Naive thymus-derived CD8-positive, alpha-beta T cell (primary cell): ENCODE measurements at regions of chr22 and their contacts with region 1.

Region 1: GRCh38 chr22:42090596-42091454 is at the start of gene NDUFA6:
- DNase-seq: peak; percentile 92 to 99 (median 98)
- ATAC-seq: peak; percentile 86 to 92
- H3K4me3 Mint-ChIP-seq: peak within 1 kb of the TSS; percentile 94 to 99 (median 98)
- H3K27ac Mint-ChIP-seq: peak within 1 kb of the TSS; percentile 95 to 100 (median 99)
- H3K4me1 Mint-ChIP-seq: peaks cover 16 to 44% (median 28%) of the 10 kb centered on the region in 4 donors
- H3K27me3 Mint-ChIP-seq: no peaks in the 10 kb centered on the region
- polyA plus RNA-seq, gene NDUFA6: 106 to 137 (median 115) TPM

Region 2: GRCh38 chr22:42039271-42039670 is 51.6 kb before region 1 on chr22:
- POLR2A ChIA-PET with region 1: no interaction called
- DNase-seq: no peak
- ATAC-seq: no peak
- H3K4me3 Mint-ChIP-seq: no peak overlapping the region
- H3K27ac Mint-ChIP-seq: no peak overlapping the region
- H3K4me1 Mint-ChIP-seq: peaks cover 0 to 7% (median under 1%) of the 10 kb centered on the region in 4 donors
- H3K27me3 Mint-ChIP-seq: peaks cover 0 to 2% (median 0%) of the 10 kb centered on the region in 5 donors

Region 3: GRCh38 chr22:42070517-42071422 is 20.1 kb before region 1 on chr22 and contains the start of gene NAGA:
- POLR2A ChIA-PET with region 1: interaction called, 163 read pairs
- DNase-seq: peak; percentile 79 to 95 (median 88)
- ATAC-seq: peak; percentile 96 to 98
- H3K4me3 Mint-ChIP-seq: peak within 1 kb of the TSS; percentile 86 to 97 (median 93)
- H3K27ac Mint-ChIP-seq: peak within 1 kb of the TSS; percentile 64 to 95 (median 92)
- H3K4me1 Mint-ChIP-seq: peaks cover 21 to 53% (median 38%) of the 10 kb centered on the region in 4 donors
- H3K27me3 Mint-ChIP-seq: no peaks in the 10 kb centered on the region
- polyA plus RNA-seq, gene NAGA: 8.2 to 11.2 (median 10.2) TPM

Region 4: GRCh38 chr22:42444077-42444904 is 353.5 kb after region 1 on chr22:
- POLR2A ChIA-PET with region 1: interaction called, 22 read pairs
- DNase-seq: peak; percentile 55 to 87 (median 81)
- ATAC-seq: peak; percentile 88 to 91
- H3K4me3 Mint-ChIP-seq: peak overlapping the region; percentile 74 to 89 (median 82)
- H3K27ac Mint-ChIP-seq: peak overlapping the region; percentile 84 to 95 (median 92)
- H3K4me1 Mint-ChIP-seq: peaks cover 10 to 29% (median 22%) of the 10 kb centered on the region in 4 donors
- H3K27me3 Mint-ChIP-seq: no peaks in the 10 kb centered on the region